Caco-2 (cell line): ENCODE measurements at regions of chr18 and their contacts with region 1.

Region 1: DNA sequence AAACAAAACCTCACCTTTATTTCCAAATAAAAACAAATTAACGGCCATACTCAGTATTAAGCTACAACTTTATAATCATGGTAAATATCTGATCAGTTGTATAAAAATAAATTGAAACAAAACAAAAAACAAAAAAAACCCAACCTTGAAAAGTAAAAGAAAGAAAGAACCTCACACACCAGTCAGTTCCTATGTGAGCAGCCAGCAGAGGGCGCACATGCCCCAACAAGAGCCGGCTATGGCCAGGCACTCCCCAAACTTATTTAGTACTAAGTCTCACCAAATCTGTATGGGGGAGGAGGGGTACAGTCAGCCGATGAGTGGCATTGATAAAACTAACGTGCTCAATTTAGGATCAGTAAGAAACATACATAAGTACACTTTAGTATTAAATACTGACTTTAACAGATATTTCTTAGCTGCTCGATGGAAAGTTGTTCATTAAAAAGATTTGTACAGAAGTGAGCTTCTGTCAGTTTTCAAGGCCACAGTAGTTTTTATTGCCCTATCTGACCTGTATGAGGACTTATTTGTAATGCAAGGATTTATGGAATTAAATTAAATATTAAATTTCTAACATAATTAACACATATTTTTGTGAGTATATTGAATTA is 172.6 kb downstream of the TCF4 start:
- DNase-seq: peak; percentile 58 to 64
- H3K4me3 ChIP-seq: no peak overlapping the region
- H3K4me3 Mint-ChIP-seq: no peak overlapping the region
- H3K27ac Mint-ChIP-seq: no peak overlapping the region
- H3K4me1 ChIP-seq: no peaks in the 10 kb centered on the region
- H3K4me1 Mint-ChIP-seq: no peaks in the 10 kb centered on the region
- H3K27me3 ChIP-seq: no peaks in the 10 kb centered on the region
- H3K27me3 Mint-ChIP-seq: no peaks in the 10 kb centered on the region
- CTCF ChIP-seq: peak; percentile 46 to 73

Region 2: DNA sequence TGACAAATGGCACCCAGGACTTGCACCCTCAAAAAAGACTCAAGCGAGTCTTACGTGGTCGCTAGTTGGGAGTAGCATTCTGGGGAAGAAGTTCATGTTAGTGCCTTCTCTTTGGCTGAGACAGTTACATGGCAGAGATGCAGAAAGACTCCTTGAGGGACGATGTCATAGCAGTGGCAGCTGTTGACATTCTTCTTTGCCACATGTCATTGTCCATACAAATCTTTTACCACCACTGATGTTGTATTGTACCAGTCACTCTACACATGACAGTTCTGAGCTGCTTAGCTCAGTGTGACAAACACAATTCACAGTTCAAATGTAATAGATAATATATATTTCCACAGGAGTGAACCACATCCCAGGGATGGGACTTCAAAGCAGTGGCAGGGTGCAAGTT is 24.5 kb before region 1 on chr18:
- CTCF ChIA-PET with region 1: no interaction called
- POLR2A ChIA-PET with region 1: no interaction called
- intact Hi-C with region 1: no loop called
- DNase-seq: no peak
- H3K4me3 ChIP-seq: no peak overlapping the region
- H3K4me3 Mint-ChIP-seq: no peak overlapping the region
- H3K27ac Mint-ChIP-seq: no peak overlapping the region
- H3K4me1 ChIP-seq: no peaks in the 10 kb centered on the region
- H3K4me1 Mint-ChIP-seq: no peaks in the 10 kb centered on the region
- H3K27me3 ChIP-seq: no peaks in the 10 kb centered on the region
- H3K27me3 Mint-ChIP-seq: no peaks in the 10 kb centered on the region
- CTCF ChIP-seq: no peak

Region 3: GRCh38 chr18:55477499-55477859 is 62.1 kb after region 1 on chr18:
- CTCF ChIA-PET with region 1: no interaction called
- POLR2A ChIA-PET with region 1: no interaction called
- intact Hi-C with region 1: loop called (anchors 10 kb)
- DNase-seq: no peak
- H3K4me3 ChIP-seq: no peak overlapping the region
- H3K4me3 Mint-ChIP-seq: no peak overlapping the region
- H3K27ac Mint-ChIP-seq: no peak overlapping the region
- H3K4me1 ChIP-seq: peaks cover 1% of the 10 kb centered on the region; the same call in 1 of the 2 replicates
- H3K4me1 Mint-ChIP-seq: peaks cover 7% of the 10 kb centered on the region
- H3K27me3 ChIP-seq: no peaks in the 10 kb centered on the region
- H3K27me3 Mint-ChIP-seq: no peaks in the 10 kb centered on the region
- CTCF ChIP-seq: no peak

Region 4: GRCh38 chr18:55589625-55590291 is 174.4 kb after region 1 on chr18:
- CTCF ChIA-PET with region 1: no interaction called
- POLR2A ChIA-PET with region 1: no interaction called
- intact Hi-C with region 1: loop called (anchors 10 kb)
- DNase-seq: no peak
- H3K4me3 ChIP-seq: no peak overlapping the region
- H3K4me3 Mint-ChIP-seq: no peak overlapping the region
- H3K27ac Mint-ChIP-seq: no peak overlapping the region
- H3K4me1 ChIP-seq: no peaks in the 10 kb centered on the region
- H3K4me1 Mint-ChIP-seq: peaks cover 14% of the 10 kb centered on the region
- H3K27me3 ChIP-seq: no peaks in the 10 kb centered on the region
- H3K27me3 Mint-ChIP-seq: no peaks in the 10 kb centered on the region
- CTCF ChIP-seq: no peak

Region 5: DNA sequence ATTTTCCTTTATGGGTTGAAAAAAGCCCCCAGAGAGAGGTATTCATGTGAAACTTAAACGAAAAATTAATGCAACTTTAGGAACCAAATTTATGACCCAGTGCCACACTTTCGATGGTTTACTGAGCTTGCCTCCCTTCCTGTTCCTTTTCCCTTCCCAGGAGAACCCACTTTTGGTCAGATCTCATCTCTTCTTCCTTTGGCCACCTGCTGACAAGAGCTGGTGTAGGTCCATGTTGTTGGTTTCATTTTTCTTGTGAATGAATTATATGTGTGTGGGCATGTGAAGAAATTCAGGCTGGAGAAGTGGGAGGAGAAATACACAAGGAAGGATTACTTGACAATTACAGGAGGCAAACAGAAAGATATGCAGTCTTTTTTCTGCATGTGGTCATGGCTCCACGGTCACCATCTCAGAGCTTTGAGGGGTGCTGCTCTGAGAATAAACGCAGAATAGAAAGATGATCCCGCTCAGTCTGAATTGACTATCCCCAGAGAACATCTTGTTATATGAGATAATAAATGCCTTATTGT is 283.9 kb after region 1 on chr18:
- CTCF ChIA-PET with region 1: no interaction called
- POLR2A ChIA-PET with region 1: no interaction called
- intact Hi-C with region 1: loop called (anchors 5 kb)
- DNase-seq: no peak
- H3K4me3 ChIP-seq: no peak overlapping the region
- H3K4me3 Mint-ChIP-seq: no peak overlapping the region
- H3K27ac Mint-ChIP-seq: no peak overlapping the region
- H3K4me1 ChIP-seq: no peaks in the 10 kb centered on the region
- H3K4me1 Mint-ChIP-seq: no peaks in the 10 kb centered on the region
- H3K27me3 ChIP-seq: no peaks in the 10 kb centered on the region
- H3K27me3 Mint-ChIP-seq: no peaks in the 10 kb centered on the region
- CTCF ChIP-seq: no peak

Region 6: GRCh38 chr18:55781481-55781957 is 366.2 kb after region 1 on chr18:
- CTCF ChIA-PET with region 1: interaction called, 5 read pairs
- POLR2A ChIA-PET with region 1: no interaction called
- intact Hi-C with region 1: loop called (anchors 1 kb)
- DNase-seq: peak; percentile 36 to 37
- H3K4me3 ChIP-seq: no peak overlapping the region
- H3K4me3 Mint-ChIP-seq: no peak overlapping the region
- H3K27ac Mint-ChIP-seq: no peak overlapping the region
- H3K4me1 ChIP-seq: no peaks in the 10 kb centered on the region
- H3K4me1 Mint-ChIP-seq: no peaks in the 10 kb centered on the region
- H3K27me3 ChIP-seq: no peaks in the 10 kb centered on the region
- H3K27me3 Mint-ChIP-seq: no peaks in the 10 kb centered on the region
- CTCF ChIP-seq: peak; percentile 41

Region 7: DNA sequence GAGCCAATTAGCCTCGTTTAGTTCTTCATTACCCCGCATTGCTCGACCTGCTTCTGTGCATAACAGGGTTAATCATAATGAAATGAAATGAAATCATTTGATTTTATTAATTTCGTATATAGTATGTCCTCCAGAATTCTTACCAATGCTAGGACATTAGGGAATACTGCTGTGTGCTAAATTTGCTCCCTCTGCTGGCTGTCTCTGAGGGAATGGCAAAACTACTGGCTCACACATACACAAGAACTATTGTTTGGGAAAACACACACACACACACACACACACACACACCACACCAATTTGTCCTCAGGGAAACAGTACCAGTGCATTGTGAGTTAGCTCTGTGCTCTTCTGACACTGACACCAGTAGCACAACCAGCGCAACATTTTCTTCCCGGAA is 445.9 kb after region 1 on chr18:
- CTCF ChIA-PET with region 1: no interaction called
- POLR2A ChIA-PET with region 1: no interaction called
- intact Hi-C with region 1: loop called (anchors 1 kb)
- DNase-seq: peak in 1 of 2 experiments; percentile 5
- H3K4me3 ChIP-seq: no peak overlapping the region
- H3K4me3 Mint-ChIP-seq: no peak overlapping the region
- H3K27ac Mint-ChIP-seq: no peak overlapping the region
- H3K4me1 ChIP-seq: peaks cover 7% of the 10 kb centered on the region
- H3K4me1 Mint-ChIP-seq: peaks cover 12% of the 10 kb centered on the region
- H3K27me3 ChIP-seq: no peaks in the 10 kb centered on the region
- H3K27me3 Mint-ChIP-seq: no peaks in the 10 kb centered on the region
- CTCF ChIP-seq: peak; percentile 20 to 36